ENCODE measurements at regions of chr7 and their contacts with region 1.

Region 1: DNA sequence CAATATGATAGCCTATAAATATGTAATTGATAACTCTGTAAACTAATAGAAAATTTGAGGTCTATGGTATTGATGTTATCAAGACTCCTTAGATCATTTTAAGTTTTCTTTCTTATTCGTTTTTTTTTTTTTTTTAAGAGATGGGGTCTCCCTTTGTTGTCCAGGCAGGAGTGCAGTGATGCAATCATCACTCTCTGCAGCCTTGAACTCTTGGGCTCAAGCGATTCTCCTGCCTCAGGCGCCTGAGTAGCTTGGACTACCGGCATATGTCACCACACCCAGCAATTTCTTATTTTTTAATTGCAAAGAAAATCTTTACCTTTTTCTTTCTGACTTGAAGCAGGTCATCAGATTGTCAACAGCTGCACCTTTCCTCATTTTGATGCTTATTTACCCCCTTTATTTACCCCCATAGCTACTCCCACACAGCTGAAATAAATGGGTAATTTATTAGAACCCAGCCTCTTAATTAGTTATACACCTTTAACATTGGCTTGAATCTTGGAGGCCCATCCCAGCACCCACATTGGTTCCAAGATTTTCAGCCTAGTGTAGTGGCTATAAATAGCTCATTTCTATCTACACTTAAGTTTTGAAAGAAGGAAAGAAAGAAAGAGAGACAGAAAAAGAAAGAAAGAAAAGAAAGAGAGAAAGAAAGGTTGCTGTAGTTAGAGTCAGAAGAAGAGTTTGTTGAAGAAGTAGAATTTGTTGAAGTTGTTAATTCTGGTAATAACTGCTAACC is 38.3 kb downstream of the ARL4A start:
- DNase-seq: no peak
- ATAC-seq: no peak
- H3K4me3 ChIP-seq: no peak overlapping the region
- H3K4me3 Mint-ChIP-seq: no peak overlapping the region
- H3K27ac ChIP-seq: no peak overlapping the region
- H3K27ac Mint-ChIP-seq: no peak overlapping the region
- H3K4me1 ChIP-seq: peaks cover 0 to 4% of the 10 kb centered on the region in 2 experiments
- H3K4me1 Mint-ChIP-seq: peaks cover 9 to 19% (median 17%) of the 10 kb centered on the region in 3 donors
- H3K27me3 ChIP-seq: no peaks in the 10 kb centered on the region
- H3K27me3 Mint-ChIP-seq: peaks cover 0 to 3% of the 10 kb centered on the region in 2 donors

Region 2: GRCh38 chr7:12291870-12292269 is 433.9 kb before region 1 on chr7:
- CTCF ChIA-PET with region 1: no interaction called
- POLR2A ChIA-PET with region 1: interaction called in 1 of 2 experiments, 10 read pairs
- DNase-seq: peak in 1 of 35 experiments; percentile 31
- ATAC-seq: no peak
- H3K4me3 ChIP-seq: no peak overlapping the region
- H3K4me3 Mint-ChIP-seq: no peak overlapping the region
- H3K27ac ChIP-seq: no peak overlapping the region
- H3K27ac Mint-ChIP-seq: no peak overlapping the region
- H3K4me1 ChIP-seq: no peaks in the 10 kb centered on the region
- H3K4me1 Mint-ChIP-seq: peaks cover 0 to 4% (median 0%) of the 10 kb centered on the region in 3 donors
- H3K27me3 ChIP-seq: peaks cover 0 to 5% of the 10 kb centered on the region in 2 experiments
- H3K27me3 Mint-ChIP-seq: no peaks in the 10 kb centered on the region